ENCODE measurements at regions of chr2 and their contacts with region 1.

Region 1: DNA sequence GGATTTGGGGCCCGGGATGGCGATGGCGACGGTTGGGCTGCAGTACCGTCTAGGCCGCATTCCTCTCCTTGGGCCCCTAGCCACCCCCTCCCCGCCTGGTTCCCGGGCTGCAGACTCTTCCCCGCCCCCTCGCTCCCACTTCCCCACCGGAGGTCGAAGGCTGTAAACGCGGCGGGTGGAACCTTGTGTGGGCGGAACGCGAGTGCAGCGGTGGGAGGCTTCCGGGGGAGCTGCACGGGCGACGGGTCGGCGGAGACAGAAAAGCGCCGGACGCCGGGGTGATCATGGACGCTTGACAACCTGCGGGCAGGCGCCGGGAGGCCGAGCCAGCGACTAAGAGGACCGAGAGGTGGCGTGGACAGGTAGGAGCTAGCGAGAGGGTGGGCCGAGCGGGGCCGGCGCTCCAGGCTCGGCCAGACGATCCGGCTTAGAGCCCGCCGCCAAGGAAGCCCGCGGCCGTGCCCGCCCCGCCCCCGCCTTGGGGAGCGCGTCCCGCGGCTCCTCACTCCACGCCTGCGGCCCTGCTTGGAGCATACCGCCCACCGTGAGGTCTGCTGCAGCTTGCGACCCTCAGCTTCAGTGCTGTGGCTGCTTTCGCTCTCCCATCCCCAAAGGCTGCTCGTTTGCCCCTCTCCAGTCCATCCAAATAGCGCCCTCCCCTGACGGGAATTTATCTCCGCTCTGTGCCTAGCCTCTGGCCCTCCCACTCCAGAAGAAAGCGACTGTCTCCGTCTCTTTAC is at the start of gene COPS7B:
- DNase-seq: peak; percentile 72
- ATAC-seq: peak; percentile 86
- H3K4me3 ChIP-seq: peak within 1 kb of the TSS; percentile 88
- H3K27ac ChIP-seq: peak within 1 kb of the TSS; percentile 80
- H3K4me1 ChIP-seq: peaks cover 6% of the 10 kb centered on the region
- H3K27me3 ChIP-seq: no peaks in the 10 kb centered on the region
- CTCF ChIP-seq: peak; percentile 54
- POLR2A ChIP-seq: no peak
- RAD21 ChIP-seq: peak; percentile 34
- total RNA-seq, gene COPS7B: 22.2 and 23.1 TPM in 2 replicates

Region 2: GRCh38 chr2:231662028-231662810 is 124.1 kb before region 1 on chr2:
- CTCF ChIA-PET with region 1: no interaction called
- POLR2A ChIA-PET with region 1: no interaction called
- dilution Hi-C with region 1: no loop called
- in situ Hi-C with region 1: no loop called
- intact Hi-C with region 1: no loop called
- DNase-seq: peak; percentile 95
- ATAC-seq: peak; percentile 73
- H3K4me3 ChIP-seq: peak overlapping the region; percentile 20
- H3K27ac ChIP-seq: peak overlapping the region; percentile 55
- H3K4me1 ChIP-seq: peaks cover 14% of the 10 kb centered on the region
- H3K27me3 ChIP-seq: no peaks in the 10 kb centered on the region
- CTCF ChIP-seq: 0 out of 2 replicates have a peak, but pooled peaks have one; percentile 8
- POLR2A ChIP-seq: peak; percentile 60; the same call in 1 of the 2 replicates
- RAD21 ChIP-seq: peak; percentile 18

Region 3: GRCh38 chr2:231709981-231710798 is 76.2 kb before region 1 on chr2:
- CTCF ChIA-PET with region 1: interaction called, 3 read pairs
- POLR2A ChIA-PET with region 1: no interaction called
- dilution Hi-C with region 1: no loop called
- in situ Hi-C with region 1: no loop called
- intact Hi-C with region 1: loop called (anchors 2 kb)
- DNase-seq: peak; percentile 80
- ATAC-seq: peak; percentile 38
- H3K4me3 ChIP-seq: peak overlapping the region; percentile 89
- H3K27ac ChIP-seq: peak overlapping the region; percentile 86
- H3K4me1 ChIP-seq: peaks cover 12% of the 10 kb centered on the region
- H3K27me3 ChIP-seq: no peaks in the 10 kb centered on the region
- CTCF ChIP-seq: peak; percentile 98
- POLR2A ChIP-seq: peak; percentile 78
- RAD21 ChIP-seq: peak; percentile 40